Activated B cell treated with CpG ODN at 0.5 μM for 24 hours (primary cell): ENCODE measurements at regions of chr12 and their contacts with region 1.

Region 1: DNA sequence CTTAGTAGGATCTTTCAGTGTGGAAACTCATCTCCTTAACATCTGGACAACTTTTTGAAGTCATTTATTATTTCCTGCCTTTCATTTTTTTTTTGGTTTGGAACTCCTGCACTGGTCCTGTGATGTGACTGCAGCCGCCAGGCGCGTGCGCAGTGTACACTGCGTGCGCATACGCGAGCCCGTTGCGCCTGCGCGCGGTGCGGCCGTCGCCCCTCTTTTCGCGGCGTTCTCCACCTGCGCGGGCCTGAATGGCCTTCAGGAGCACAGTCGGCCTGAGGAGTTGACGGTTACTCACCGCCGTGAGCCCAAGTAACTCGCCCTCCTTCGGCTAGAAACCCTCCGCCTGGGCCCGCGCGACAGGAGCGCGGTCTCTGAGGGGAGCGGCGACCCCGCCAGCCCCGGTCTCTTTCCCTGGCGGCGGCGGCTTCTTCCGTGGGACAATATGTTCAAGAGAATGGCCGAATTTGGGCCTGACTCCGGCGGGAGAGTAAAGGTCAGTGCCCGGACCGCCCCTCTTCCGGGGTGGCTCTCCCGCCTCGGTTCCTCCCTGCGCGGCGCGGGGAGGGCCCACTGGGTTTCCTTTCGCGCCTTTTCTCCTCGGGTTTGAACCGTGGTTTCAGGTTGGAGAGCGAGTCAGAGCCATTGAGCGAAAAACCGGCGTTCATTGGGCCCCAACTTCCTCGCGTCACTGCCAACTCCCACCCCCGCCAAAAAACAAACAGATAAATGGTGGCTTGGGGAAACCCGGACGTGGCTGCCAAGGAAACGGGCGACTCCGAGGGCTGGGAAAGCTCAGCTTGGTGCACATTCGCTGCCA is at the start of gene YEATS4:
- DNase-seq: peak; percentile 82
- ATAC-seq: peak; percentile 81
- H3K4me3 Mint-ChIP-seq: peak within 1 kb of the TSS; percentile 88
- H3K27ac Mint-ChIP-seq: peak within 1 kb of the TSS; percentile 81
- H3K4me1 Mint-ChIP-seq: peaks cover 20% of the 10 kb centered on the region
- H3K27me3 Mint-ChIP-seq: no peaks in the 10 kb centered on the region
- CTCF ChIP-seq: no peak
- total RNA-seq, gene YEATS4: 14.9 and 19.3 TPM in 2 replicates

Region 2: DNA sequence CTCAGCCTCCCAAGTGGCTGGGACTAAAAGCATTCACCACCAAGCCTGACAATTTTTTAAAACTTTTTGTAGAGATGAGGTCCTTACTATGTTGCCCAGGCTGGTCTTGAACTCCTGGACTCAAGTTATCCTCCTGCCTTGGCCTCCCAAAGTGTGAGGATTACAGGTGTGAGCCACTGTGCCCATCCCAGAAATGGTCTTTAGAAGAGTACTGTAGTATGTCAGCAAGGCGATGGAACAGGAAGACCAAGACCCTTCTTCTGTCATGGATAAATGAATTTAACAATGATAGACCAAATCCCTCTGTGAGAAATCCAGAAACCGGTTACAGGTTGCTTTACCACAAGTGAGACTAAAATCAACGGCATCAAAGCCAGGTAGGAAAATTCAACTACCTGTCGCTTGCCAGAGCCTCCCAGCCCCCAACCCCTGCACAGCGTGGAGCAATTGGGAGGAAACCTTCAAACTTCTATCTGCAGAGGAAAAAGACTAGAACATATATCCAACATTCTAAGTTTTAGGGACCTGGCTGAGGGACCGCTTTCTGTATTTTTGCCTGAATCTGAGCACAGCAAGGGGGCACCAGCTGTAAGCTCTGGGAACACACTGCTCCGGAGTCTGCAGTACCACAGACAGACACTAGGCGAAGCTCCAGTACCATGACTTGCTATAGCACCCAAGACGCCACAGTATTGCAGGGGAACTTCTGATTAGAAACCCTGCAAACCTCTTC is 69.0 kb before region 1 on chr12:
- CTCF ChIA-PET with region 1: interaction called, 11 read pairs
- POLR2A ChIA-PET with region 1: interaction called, 6 read pairs
- intact Hi-C with region 1: loop called (anchors 1 kb)
- DNase-seq: peak; percentile 56
- ATAC-seq: peak; percentile 100
- H3K4me3 Mint-ChIP-seq: no peak overlapping the region
- H3K27ac Mint-ChIP-seq: no peak overlapping the region
- H3K4me1 Mint-ChIP-seq: peaks cover 2% of the 10 kb centered on the region
- H3K27me3 Mint-ChIP-seq: peaks cover 45% of the 10 kb centered on the region
- CTCF ChIP-seq: peak; percentile 99

Region 3: GRCh38 chr12:69470189-69471075 is 110.7 kb after region 1 on chr12 and contains the start of gene FRS2:
- CTCF ChIA-PET with region 1: no interaction called
- POLR2A ChIA-PET with region 1: no interaction called
- intact Hi-C with region 1: loop called (anchors 1 kb)
- DNase-seq: peak; percentile 77
- ATAC-seq: peak; percentile 98
- H3K4me3 Mint-ChIP-seq: peak within 1 kb of the TSS; percentile 99
- H3K27ac Mint-ChIP-seq: peak within 1 kb of the TSS; percentile 95
- H3K4me1 Mint-ChIP-seq: peaks cover 77% of the 10 kb centered on the region
- H3K27me3 Mint-ChIP-seq: no peaks in the 10 kb centered on the region
- CTCF ChIP-seq: no peak
- total RNA-seq, gene FRS2: 23.2 and 23.8 TPM in 2 replicates

Region 4: DNA sequence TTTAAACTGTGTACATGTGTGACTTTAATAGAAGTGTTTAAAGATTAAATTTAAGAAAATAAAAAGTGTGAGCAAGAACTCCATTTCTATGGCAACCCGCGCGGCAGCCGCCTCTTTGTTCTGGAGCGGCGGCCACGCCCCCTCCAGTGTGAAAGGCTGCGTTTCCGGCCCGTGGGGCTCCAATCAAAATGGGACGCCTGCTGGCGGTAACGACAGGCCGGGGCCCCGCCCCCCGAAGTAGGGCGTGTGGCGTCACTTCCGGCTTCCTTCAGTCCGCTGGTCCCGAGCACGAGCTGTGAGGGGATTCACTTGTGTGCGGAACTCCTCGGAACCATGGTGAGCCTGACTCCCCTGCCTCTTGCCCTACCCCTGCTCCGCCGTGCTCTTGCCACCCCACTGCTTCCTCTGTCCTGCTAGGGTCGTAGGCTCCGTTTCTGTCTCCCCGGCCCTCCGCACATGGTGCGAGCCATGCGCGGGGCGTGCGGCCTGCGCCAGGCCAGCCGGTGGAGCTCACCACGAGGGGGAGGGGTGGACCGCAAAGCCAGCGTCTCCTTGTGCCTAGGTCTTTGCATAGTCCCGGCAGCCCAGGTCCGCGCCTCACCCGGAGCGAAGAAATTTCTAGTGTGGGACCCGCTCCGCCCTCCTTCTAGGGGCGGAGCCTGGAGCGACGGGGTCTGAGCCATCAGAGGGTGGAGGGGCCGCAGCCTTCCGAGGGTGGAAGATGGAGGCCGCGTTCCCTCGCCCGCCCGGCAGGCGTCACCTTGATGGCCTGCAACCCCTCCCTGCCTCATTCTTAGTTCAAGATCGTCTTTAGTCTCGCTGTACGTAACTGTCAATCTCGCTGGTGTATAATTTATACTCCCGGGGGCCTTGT is 225.7 kb after region 1 on chr12 and contains the start of gene CCT2:
- CTCF ChIA-PET with region 1: interaction called, 5 read pairs
- POLR2A ChIA-PET with region 1: no interaction called
- intact Hi-C with region 1: loop called (anchors 1 kb)
- DNase-seq: peak; percentile 91
- ATAC-seq: peak; percentile 90
- H3K4me3 Mint-ChIP-seq: peak within 1 kb of the TSS; percentile 96
- H3K27ac Mint-ChIP-seq: peak within 1 kb of the TSS; percentile 95
- H3K4me1 Mint-ChIP-seq: peaks cover 8% of the 10 kb centered on the region
- H3K27me3 Mint-ChIP-seq: no peaks in the 10 kb centered on the region
- CTCF ChIP-seq: no peak
- total RNA-seq, gene CCT2: 205 and 211 TPM in 2 replicates

Region 5: DNA sequence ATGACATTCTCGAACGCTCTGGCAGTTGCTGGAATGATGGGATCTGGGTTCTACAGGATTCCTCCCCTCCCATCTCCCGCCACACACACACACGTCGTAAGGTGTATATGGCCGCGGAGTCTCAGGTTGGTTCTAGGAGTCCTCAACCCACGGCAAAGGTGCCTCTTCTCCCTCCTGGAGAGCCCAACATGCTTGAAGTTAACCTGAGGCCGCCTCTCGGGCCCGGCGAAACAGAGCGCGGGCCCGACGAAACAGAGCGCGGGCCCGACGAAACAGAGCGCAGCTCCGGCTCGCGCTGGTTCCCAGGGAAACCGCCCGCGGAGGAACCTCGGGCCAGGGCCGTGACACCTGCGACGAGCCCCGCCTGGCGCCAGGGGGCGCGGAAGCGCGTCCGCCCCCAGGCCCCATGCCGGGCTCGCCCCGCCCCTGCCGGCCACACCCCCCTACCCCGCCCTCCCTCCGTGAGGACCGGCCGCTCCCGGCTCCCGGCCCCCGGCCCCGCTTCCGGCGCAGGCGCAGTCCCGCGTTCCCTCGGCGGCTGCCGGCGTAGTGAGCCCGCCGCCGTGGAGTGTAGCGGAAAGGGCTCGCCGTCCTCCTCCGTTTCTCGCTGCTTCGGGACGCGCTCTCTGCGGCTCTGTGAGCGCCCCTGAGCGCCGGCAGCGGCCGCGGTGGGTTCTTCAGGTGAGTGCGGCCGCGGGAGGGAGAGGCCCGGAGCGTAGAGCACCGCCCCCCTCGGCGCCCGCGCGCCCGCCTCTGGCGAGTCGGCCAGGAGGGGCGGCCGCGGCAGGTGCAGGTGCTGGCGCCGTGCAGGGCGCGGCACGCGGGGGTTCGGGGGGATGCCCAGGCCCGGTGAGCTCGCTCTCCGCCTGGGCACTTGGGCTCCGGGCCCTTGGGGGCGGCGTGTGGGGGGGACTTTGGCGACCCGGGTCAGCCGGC is 378.9 kb after region 1 on chr12 and contains the start of gene RAB3IP:
- CTCF ChIA-PET with region 1: no interaction called
- POLR2A ChIA-PET with region 1: no interaction called
- intact Hi-C with region 1: loop called (anchors 1 kb)
- DNase-seq: peak; percentile 93
- ATAC-seq: peak; percentile 90
- H3K4me3 Mint-ChIP-seq: peak within 1 kb of the TSS; percentile 85
- H3K27ac Mint-ChIP-seq: peak within 1 kb of the TSS; percentile 73
- H3K4me1 Mint-ChIP-seq: peaks cover 19% of the 10 kb centered on the region
- H3K27me3 Mint-ChIP-seq: peaks cover 4% of the 10 kb centered on the region
- CTCF ChIP-seq: no peak
- total RNA-seq, gene RAB3IP: 34.6 and 37.9 TPM in 2 replicates